BJ (cell line): ENCODE measurements at regions of chr6 and their contacts with region 1.

Region 1: DNA sequence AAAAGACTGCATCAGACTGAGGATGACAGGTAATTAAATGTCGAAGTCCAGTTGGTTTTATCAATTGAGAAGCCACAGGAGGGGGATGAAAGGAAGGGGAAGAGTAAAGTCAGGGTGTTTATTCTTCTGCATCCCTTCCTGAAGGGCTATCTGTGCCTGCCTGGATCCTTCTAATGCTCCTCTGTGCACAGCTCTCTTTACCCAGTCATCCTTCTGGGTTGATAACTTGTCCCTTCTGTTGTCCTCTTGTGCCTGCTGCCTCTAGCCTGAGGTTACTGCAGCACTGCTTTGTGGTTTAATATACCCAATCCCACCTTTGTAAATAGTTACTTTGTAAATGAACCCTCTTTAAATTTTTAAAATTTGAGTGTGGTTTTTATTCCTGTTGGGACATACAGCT is 1127.3 kb downstream of the EPHA7 start:
- DNase-seq: no peak
- H3K4me3 ChIP-seq: no peak overlapping the region
- H3K27me3 ChIP-seq: no peaks in the 10 kb centered on the region
- CTCF ChIP-seq: no peak

Region 2: DNA sequence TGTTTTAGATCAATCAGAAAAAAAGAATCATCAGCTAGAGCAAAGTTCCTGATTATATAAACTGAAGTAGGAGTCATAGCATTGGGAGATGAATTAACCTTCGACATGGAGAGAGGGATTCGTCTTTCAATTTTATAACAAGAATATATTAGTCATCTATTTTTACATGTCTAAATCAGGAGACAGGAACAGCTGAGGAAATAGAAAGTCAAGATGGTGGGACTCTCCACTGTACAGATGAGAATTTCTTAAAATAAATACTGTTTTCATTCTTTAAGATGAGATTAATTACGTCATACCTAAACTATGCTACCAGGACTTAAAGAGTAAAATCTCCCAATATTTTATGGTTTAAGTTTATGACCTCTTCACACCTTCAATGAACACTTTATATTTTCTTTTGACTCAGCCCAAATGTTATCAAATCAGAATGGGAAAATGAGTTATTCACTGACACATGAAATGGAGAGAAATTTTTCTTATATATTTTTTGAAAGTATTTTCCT is 10.4 kb before region 1 on chr6:
- CTCF ChIA-PET with region 1: no interaction called
- POLR2A ChIA-PET with region 1: no interaction called
- DNase-seq: no peak
- H3K4me3 ChIP-seq: no peak overlapping the region
- H3K27me3 ChIP-seq: no peaks in the 10 kb centered on the region
- CTCF ChIP-seq: no peak

Region 3: DNA sequence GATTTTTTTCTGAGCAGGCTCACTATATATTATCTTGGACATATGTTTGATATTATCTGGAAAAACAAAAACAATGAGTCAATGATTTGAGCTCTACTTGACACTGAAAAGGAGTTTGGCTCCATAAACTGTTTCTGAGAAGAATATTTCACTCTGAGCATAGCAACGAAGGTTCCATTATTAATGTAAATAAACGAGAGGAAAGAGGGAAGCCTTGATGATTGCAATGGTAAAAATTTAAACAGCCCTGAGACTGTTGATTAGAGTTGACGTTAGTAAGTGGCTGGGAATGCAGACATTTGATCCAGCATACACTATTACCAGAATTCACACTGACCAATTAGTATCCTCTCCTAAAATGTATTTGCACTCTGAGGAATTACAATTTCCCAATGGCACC is 37.3 kb after region 1 on chr6:
- CTCF ChIA-PET with region 1: no interaction called
- POLR2A ChIA-PET with region 1: interaction called, 14 read pairs
- DNase-seq: no peak
- H3K4me3 ChIP-seq: no peak overlapping the region
- H3K27me3 ChIP-seq: no peaks in the 10 kb centered on the region
- CTCF ChIP-seq: no peak